ENCODE measurements at regions of chr5 and their contacts with region 1.

Region 1: DNA sequence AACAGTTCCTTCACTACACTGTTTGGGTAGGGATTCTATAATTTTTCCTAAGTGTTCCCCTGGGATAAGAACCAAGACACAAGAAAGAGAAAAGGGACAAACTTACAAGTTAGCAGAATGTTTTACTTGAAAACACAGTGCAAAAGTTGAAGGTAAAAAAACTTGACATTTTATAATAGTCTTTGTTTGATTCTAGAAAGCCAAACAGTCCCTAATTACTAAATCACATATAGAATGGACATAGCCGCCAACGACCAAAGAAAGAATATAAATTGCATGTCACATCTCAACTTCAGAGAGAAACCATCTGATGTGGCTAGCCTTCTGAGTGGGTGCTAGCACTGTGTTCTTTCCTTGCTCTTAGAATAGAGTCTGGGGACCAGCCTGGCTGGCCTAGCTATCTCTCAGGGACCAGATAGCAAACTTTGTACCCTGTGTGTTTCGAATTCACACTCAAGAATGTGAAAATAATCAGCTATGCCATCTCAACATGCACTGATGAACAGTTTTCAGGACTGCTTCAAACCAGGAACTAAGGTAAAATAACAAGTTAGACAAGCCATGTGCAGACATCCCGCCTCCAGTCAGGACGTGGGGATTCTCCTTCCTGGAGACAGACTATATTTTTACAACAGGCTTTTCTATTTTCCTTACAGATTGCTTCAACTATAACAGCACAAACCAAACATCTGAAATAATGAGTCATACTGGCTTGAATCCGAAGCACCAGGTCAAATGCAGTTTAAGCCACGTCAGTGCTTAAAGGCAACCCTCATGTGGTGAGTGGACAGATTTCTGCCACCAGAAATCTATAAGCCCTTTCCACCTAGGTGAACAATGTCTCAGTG is 53.7 kb downstream of the LHFPL2 start:
- DNase-seq: no peak
- ATAC-seq: peak; percentile 76 to 92 (median 88)
- H3K4me3 ChIP-seq: no peak overlapping the region
- H3K27ac ChIP-seq: peak overlapping the region; percentile 62
- H3K4me1 ChIP-seq: peaks cover 44% of the 10 kb centered on the region
- H3K27me3 ChIP-seq: no peaks in the 10 kb centered on the region
- CTCF ChIP-seq: no peak

Region 2: DNA sequence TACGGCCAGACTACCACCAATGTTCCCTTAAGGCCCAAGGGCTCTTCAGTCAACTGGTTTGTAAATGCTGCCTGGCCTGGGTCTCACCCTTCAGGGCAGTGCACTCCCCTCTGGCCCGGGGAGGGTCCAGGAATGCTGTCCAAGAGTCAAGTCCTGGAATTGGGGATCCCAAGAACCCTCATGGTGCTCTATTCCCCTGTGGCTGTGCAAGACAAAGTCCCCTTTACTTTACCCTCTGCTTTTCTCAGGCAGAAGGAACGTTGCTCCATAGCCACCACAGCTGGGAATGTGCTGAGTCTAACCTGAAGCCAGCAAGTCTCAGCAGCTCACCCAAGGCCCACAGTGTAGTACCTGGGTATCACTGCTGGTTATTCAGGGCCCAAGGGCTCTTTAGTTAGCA is 1693.3 kb before region 1 on chr5:
- intact Hi-C with region 1: no loop called
- DNase-seq: no peak
- ATAC-seq: no peak
- H3K4me3 ChIP-seq: no peak overlapping the region
- H3K27ac ChIP-seq: no peak overlapping the region
- H3K4me1 ChIP-seq: no peaks in the 10 kb centered on the region
- H3K27me3 ChIP-seq: no peaks in the 10 kb centered on the region
- CTCF ChIP-seq: no peak

Region 3: DNA sequence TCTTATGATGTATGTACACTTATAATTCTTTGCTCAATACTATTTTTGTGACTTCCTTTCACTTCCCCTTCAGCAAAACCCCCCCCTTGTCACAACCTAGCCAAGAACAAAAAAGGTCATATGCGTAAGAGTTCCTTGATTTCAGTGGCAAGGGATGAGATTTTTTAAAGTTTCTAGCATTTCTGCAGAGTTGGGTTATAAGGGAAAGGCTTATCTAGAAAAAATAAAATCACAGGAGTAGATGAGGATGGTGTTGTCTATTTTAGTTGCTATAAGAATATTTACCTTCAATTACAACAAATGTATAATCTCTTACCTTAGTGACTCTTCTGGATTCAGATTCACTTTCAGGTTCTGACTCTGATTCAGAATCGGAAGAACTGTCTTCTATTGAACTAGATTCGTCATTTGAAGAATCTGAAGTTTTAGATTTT is 484.9 kb before region 1 on chr5:
- intact Hi-C with region 1: no loop called
- DNase-seq: no peak
- ATAC-seq: no peak
- H3K4me3 ChIP-seq: no peak overlapping the region
- H3K27ac ChIP-seq: no peak overlapping the region
- H3K4me1 ChIP-seq: no peaks in the 10 kb centered on the region
- H3K27me3 ChIP-seq: no peaks in the 10 kb centered on the region
- CTCF ChIP-seq: no peak

Region 4: DNA sequence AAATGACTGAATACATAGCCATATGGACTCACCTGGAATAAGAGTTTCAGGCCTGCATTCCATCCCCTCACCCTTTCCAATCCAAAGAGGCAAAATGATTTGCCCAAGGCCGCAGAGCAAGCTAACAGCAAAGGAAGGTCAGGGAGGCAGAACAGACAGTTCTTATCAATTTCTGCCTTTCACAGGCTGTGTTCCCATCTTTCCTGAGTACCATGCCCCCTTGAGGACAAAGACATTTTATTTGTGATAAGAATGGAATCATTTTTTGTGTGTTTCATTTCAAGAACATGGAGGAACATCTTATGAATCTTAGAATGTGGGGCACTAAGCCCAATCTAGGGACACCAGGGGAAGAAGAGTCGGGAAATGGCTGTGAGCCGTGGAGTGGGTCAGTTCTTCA is 39.8 kb after region 1 on chr5:
- intact Hi-C with region 1: loop called in 1 of 2 experiments (anchors 5 kb)
- DNase-seq: no peak
- ATAC-seq: no peak
- H3K4me3 ChIP-seq: no peak overlapping the region
- H3K27ac ChIP-seq: no peak overlapping the region
- H3K4me1 ChIP-seq: peaks cover 31% of the 10 kb centered on the region
- H3K27me3 ChIP-seq: no peaks in the 10 kb centered on the region
- CTCF ChIP-seq: no peak